ENCODE measurements at regions of chr19 and their contacts with region 1.

Region 1: DNA sequence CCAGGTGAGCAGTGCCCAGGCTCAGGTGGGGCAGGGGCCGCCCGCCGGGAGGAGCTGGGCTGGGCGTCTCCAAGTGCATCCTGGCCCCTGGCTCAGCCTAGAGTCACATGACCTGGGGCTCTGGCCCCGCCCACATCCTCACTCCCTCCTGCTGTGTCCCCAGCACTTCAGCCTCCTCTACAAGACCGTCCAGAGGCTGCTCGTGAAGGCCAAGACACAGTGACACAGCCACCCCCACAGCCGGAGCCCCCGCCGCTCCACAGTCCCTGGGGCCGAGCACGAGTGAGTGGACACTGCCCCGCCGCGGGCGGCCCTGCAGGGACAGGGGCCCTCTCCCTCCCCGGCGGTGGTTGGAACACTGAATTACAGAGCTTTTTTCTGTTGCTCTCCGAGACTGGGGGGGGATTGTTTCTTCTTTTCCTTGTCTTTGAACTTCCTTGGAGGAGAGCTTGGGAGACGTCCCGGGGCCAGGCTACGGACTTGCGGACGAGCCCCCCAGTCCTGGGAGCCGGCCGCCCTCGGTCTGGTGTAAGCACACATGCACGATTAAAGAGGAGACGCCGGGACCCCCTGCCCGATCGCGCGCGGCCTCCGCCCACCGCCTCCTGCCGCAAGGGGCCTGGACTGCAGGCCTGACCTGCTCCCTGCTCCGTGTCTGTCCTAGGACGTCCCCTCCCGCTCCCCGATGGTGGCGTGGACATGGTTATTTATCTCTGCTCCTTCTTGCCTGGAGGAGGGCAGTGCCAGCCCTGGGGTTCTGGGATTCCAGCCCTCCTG is 16.8 kb upstream of the CELF5 start:
- DNase-seq: no peak
- H3K4me3 ChIP-seq: no peak overlapping the region
- H3K27ac ChIP-seq: no peak overlapping the region
- H3K4me1 ChIP-seq: no peaks in the 10 kb centered on the region
- H3K27me3 ChIP-seq: no peaks in the 10 kb centered on the region
- CTCF ChIP-seq: no peak
- POLR2A ChIP-seq: no peak

Region 2: DNA sequence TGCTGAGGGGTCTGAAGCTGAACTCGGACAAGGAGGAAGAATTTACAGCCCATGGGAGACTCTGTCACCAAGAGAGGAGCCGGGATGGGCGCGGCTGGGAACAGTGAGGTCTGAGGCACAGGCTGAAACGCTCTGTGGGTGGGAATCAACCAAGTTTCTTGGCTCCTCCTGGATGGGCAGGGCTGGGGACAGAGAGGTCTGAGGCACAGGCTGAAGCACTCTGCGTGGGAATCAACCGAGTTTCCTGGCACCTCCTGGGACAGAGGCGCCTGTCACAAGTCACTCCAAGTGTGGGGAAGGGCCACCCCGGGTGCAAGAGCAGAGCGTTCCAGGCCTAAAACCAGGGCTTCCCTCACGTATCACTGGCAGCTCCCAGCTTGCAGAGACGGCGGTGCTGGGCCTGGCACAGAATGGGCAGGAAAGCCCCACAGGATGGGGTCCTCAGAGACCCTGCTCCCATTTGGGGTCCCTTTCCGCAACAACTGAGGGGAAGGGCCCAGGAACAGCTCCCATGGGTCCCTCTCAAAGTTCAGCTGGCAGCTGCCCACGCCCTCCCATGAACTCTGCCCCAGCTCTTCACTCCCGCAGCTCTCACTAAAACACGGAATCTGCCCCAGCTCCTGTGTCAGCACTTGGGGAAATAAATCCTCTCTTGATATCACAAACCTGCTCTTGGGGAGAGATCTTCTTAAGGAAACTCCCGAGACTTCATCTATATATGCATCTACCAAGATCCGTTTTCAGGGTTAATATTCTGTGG is 1074.7 kb before region 1 on chr19:
- intact Hi-C with region 1: loop called (anchors 5 kb)
- DNase-seq: no peak
- H3K4me3 ChIP-seq: no peak overlapping the region
- H3K27ac ChIP-seq: no peak overlapping the region
- H3K4me1 ChIP-seq: no peaks in the 10 kb centered on the region
- H3K27me3 ChIP-seq: no peaks in the 10 kb centered on the region
- CTCF ChIP-seq: no peak
- POLR2A ChIP-seq: no peak

Measured in breast epithelium (tissue), 4 donors.